ENCODE measurements at regions of chr4 and their contacts with region 1.

Region 1: DNA sequence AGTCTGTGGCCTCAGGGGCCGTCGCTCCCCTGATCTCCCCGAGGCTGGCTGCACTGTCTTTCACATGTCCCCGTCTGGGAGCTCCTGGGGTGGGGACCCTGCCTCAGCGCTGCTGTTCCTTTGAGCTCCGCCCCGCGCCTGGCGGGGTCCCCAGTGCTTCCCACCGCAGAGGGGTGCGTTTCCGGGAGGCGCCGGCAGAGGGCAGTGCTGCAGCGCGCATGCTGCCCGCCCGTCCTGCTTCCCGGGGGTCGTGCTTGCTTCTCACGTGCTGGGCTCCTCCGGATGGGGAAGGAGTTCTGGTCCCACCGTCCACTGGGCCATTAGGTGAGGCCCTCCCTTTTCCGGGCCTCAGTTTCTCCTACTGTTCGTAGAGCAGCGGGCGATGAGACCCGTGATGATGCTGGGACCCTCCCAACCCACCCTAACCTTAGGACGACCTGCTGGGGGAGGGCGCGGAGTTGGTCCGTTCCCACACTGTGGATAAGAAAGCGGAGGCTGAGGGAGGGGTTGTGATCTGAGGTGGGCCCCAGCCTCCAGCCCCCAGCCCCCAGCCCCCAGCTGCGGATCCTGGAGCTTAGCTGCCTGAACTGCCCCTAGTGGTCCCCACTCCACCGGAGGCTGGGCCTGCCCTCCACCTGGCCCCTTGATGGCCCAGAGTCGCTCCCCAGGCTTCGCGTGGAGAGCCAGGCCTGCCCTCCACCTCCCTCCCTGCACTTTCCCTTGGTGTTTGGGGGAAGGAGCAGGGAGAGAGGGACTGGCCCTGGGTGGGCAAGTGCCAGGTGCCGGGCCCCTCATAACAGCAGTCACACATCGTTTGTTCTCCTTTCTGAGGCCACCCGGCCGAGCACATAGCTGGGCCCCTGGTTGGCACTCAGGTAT is 15.3 kb downstream of the CPZ start:
- DNase-seq: no peak
- H3K4me3 ChIP-seq: no peak overlapping the region
- H3K27ac ChIP-seq: no peak overlapping the region
- H3K4me1 ChIP-seq: no peaks in the 10 kb centered on the region
- H3K27me3 ChIP-seq: peaks cover 3% of the 10 kb centered on the region
- CTCF ChIP-seq: peak; percentile 72 to 91 (median 82)
- POLR2A ChIP-seq: no peak

Region 2: DNA sequence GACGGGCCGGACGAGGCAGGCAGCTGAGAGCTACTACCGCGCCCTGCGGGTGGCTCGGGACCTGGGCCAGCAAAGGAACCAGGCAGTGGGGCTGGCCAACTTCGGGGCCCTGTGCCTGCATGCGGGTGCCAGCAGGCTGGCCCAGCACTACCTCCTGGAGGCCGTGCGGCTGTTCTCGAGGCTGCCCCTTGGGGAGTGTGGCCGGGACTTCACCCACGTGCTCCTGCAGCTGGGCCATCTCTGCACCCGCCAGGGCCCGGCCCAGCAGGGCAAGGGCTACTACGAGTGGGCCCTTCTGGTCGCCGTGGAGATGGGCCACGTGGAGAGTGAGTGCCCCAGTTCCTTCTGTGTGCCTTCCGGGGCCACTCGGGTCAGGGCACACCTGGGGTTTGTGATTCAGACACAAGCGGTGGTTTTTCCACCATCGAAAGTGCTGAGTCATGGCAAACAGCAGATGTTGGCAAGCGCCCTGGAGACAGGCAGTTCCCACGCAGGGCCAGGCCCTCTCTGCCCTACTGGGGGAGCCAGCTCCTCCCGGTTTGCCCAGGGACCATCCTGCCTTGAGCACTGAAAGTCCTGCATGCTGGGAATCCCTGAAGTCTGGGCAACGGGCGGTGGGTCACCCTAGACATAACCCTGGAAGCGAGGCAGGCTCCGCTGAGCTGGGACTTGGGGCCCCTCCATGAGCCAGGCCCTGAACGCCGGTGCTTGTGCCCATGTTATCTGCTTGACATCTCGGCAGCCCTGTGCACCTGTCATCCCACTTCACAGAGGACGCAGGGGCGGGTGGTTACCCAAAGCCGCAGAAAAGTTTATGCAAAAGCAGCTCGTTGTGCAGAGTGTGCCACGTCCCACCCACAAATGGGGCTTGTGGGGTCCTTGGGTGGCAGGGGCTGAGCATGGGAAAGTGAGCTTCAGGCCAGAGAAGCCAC is 379.3 kb before region 1 on chr4:
- intact Hi-C with region 1: no loop called
- DNase-seq: peak; percentile 78
- H3K4me3 ChIP-seq: no peak overlapping the region
- H3K27ac ChIP-seq: peak overlapping the region; percentile 51 to 59
- H3K4me1 ChIP-seq: peaks cover 7% of the 10 kb centered on the region
- H3K27me3 ChIP-seq: no peaks in the 10 kb centered on the region
- CTCF ChIP-seq: peak in 1 of 4 experiments; percentile 14
- POLR2A ChIP-seq: no peak

Region 3: GRCh38 chr4:8468746-8469535 is 138.9 kb before region 1 on chr4:
- intact Hi-C with region 1: no loop called
- DNase-seq: peak; percentile 50
- H3K4me3 ChIP-seq: no peak overlapping the region
- H3K27ac ChIP-seq: no peak overlapping the region
- H3K4me1 ChIP-seq: no peaks in the 10 kb centered on the region
- H3K27me3 ChIP-seq: no peaks in the 10 kb centered on the region
- CTCF ChIP-seq: peak; percentile 86 to 89 (median 89)
- POLR2A ChIP-seq: no peak

Region 4: DNA sequence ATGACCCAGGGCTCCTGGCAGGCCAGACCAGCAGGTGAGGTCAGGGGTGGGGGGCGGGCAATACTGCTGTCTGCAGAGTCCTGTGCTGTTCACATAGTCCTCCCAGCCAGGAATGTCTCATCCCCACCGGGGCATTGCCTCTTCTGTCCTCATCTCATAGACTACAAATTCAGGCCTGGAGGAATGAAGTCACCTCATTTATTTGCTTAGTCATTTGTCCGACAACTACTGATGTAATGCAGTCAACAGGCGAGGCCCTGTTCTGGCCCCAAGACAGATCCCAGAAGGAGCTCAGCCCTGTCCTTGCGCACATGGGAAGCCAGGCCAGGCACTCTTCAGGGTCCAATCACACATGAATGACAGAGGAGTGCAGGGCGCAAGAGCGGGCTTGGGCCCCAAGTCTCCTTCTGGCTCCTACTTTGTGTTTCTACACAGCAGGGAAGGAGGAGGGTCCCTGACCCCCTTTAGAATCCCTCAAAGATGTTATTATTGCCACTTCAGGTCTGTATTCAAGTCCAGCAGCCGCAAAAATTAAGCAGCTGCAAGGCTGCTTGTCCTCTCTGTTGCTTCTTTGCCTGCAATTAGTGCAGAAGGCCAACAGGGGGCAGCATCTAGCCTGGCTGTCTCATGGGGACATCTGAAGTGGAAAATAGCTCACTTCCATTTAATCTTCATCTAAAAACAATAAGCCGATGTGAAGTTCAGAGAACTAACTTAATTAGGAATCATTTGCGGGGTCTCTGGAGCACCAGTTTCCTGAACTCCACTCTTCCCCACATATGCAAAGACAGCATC is 279.0 kb after region 1 on chr4:
- intact Hi-C with region 1: loop called (anchors 10 kb)
- DNase-seq: no peak
- H3K4me3 ChIP-seq: no peak overlapping the region
- H3K27ac ChIP-seq: no peak overlapping the region
- H3K4me1 ChIP-seq: no peaks in the 10 kb centered on the region
- H3K27me3 ChIP-seq: peaks cover 15% of the 10 kb centered on the region
- CTCF ChIP-seq: peak in 1 of 4 experiments; percentile 12
- POLR2A ChIP-seq: no peak

Region 5: GRCh38 chr4:8917868-8918783 is 310.3 kb after region 1 on chr4:
- intact Hi-C with region 1: loop called (anchors 10 kb)
- DNase-seq: peak; percentile 43
- H3K4me3 ChIP-seq: no peak overlapping the region
- H3K27ac ChIP-seq: no peak overlapping the region
- H3K4me1 ChIP-seq: no peaks in the 10 kb centered on the region
- H3K27me3 ChIP-seq: peaks cover 4% of the 10 kb centered on the region
- CTCF ChIP-seq: peak; percentile 53 to 79 (median 72)
- POLR2A ChIP-seq: no peak

Measured in prostate gland (tissue), 2 donors.